ENCODE measurements at regions of chr7 and their contacts with region 1.

Region 1: DNA sequence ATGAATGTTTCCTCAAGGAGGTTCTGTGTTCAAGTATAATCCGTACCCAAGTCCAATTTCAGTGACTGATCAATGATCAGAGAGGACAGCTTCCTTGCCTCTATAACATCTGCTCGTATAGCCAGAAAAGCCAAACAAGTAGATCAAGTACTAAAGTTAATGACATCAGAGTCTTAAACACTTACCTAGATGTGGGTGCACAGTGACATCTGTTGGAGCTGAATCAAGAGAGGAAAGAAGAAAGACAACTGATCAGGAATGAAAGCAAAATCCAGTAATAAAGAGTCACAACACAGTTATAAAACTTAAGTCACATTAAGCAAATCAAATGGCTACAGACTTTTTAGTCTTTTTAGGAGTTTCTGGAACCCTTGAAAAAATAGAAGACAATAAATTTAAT is 236.5 kb downstream of the RELN start:
- DNase-seq: peak; percentile 33
- H3K4me3 ChIP-seq: no peak overlapping the region
- H3K27ac ChIP-seq: no peak overlapping the region
- H3K4me1 ChIP-seq: no peaks in the 10 kb centered on the region
- H3K27me3 ChIP-seq: no peaks in the 10 kb centered on the region
- CTCF ChIP-seq: peak in 1 of 2 donors; percentile 59

Region 2: GRCh38 chr7:103447073-103447951 is 305.7 kb before region 1 on chr7:
- CTCF ChIA-PET with region 1: no interaction called
- dilution Hi-C with region 1: no loop called
- in situ Hi-C with region 1: no loop called
- intact Hi-C with region 1: loop called (anchors 1 kb)
- DNase-seq: peak; percentile 34
- H3K4me3 ChIP-seq: no peak overlapping the region
- H3K27ac ChIP-seq: no peak overlapping the region
- H3K4me1 ChIP-seq: peaks cover 8% of the 10 kb centered on the region
- H3K27me3 ChIP-seq: peaks cover 9% of the 10 kb centered on the region
- CTCF ChIP-seq: peak; percentile 72 to 80

Region 3: GRCh38 chr7:103524042-103524907 is 228.7 kb before region 1 on chr7:
- CTCF ChIA-PET with region 1: no interaction called
- dilution Hi-C with region 1: no loop called
- in situ Hi-C with region 1: no loop called
- intact Hi-C with region 1: loop called (anchors 1 kb)
- DNase-seq: peak; percentile 17
- H3K4me3 ChIP-seq: no peak overlapping the region
- H3K27ac ChIP-seq: no peak overlapping the region
- H3K4me1 ChIP-seq: no peaks in the 10 kb centered on the region
- H3K27me3 ChIP-seq: no peaks in the 10 kb centered on the region
- CTCF ChIP-seq: peak; percentile 32 to 50

Region 4: GRCh38 chr7:103573479-103574058 is 179.4 kb before region 1 on chr7:
- CTCF ChIA-PET with region 1: interaction called, 4 read pairs
- dilution Hi-C with region 1: no loop called
- in situ Hi-C with region 1: loop called in 1 of 2 experiments (anchors 5 kb)
- intact Hi-C with region 1: loop called (anchors 1 kb)
- DNase-seq: peak; percentile 15
- H3K4me3 ChIP-seq: no peak overlapping the region
- H3K27ac ChIP-seq: no peak overlapping the region
- H3K4me1 ChIP-seq: no peaks in the 10 kb centered on the region
- H3K27me3 ChIP-seq: no peaks in the 10 kb centered on the region
- CTCF ChIP-seq: peak; percentile 40 to 48

Region 5: DNA sequence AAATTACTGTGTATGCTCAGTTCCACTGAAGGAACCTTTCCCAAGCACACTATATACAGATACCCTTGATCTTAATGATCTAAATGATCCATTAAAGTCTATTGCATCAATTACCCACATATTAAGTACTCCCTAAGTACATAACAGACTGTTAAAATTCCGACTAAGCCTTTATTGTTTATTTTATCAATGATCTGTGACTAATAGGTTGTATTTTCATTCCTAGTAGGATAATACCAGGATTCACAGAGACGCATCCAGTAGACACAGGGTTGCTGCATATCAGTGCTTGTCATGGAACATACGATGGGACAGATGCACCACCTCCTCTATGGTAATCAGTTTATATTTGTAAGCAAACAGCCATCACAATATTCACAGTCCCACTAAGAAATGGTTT is 147.4 kb before region 1 on chr7:
- CTCF ChIA-PET with region 1: interaction called, 14 read pairs
- dilution Hi-C with region 1: no loop called
- in situ Hi-C with region 1: no loop called
- intact Hi-C with region 1: no loop called
- DNase-seq: no peak
- H3K4me3 ChIP-seq: no peak overlapping the region
- H3K27ac ChIP-seq: no peak overlapping the region
- H3K4me1 ChIP-seq: no peaks in the 10 kb centered on the region
- H3K27me3 ChIP-seq: no peaks in the 10 kb centered on the region
- CTCF ChIP-seq: no peak

Region 6: DNA sequence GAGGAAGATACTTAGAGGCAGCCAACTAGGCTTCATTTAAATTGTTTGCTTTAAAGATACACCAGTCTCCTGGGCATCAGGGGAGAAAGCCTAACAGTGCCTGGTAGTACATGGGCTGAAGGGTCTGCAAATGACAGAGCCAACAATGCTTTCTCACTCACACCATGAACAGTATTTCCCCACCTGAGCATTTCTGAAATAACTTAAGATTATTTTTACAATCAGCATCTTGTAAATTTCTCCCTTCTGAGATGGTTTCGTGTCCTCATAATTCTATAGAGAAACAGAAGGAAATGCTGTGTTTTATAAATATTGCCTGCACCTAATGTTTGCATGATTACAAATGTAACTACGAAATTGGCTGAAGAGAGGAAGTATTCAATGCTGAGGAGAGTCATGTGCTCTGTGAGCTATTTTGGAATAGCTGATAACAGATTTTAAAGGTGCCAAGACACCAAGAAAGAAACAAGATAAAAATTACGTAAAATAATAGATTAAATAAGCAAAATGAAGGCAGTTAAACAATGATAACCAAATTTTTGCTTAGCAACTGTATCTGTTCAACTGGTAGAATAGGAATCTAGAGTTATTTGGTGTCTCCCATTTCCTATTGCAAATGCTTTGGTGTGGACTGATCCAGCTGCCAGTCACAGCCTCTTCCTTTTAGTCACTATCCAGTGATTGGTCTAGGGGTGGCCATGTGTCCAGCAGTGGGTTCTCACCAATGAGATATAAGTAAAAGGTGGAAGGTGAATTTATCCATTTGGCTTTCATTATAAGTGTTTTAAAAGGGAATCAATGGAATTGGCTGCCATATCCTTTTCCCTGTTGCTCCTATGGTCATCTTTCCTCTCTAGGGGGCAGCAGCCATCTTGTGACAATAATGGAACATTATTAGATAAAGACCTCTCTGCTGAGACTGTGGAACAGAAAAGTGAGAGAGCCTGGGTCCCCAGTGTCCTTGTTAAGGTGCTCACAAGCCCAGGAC is 139.0 kb before region 1 on chr7:
- CTCF ChIA-PET with region 1: no interaction called
- dilution Hi-C with region 1: no loop called
- in situ Hi-C with region 1: no loop called
- intact Hi-C with region 1: loop called (anchors 1 kb)
- DNase-seq: no peak
- H3K4me3 ChIP-seq: no peak overlapping the region
- H3K27ac ChIP-seq: no peak overlapping the region
- H3K4me1 ChIP-seq: no peaks in the 10 kb centered on the region
- H3K27me3 ChIP-seq: no peaks in the 10 kb centered on the region
- CTCF ChIP-seq: peak; percentile 36 to 58

Region 7: DNA sequence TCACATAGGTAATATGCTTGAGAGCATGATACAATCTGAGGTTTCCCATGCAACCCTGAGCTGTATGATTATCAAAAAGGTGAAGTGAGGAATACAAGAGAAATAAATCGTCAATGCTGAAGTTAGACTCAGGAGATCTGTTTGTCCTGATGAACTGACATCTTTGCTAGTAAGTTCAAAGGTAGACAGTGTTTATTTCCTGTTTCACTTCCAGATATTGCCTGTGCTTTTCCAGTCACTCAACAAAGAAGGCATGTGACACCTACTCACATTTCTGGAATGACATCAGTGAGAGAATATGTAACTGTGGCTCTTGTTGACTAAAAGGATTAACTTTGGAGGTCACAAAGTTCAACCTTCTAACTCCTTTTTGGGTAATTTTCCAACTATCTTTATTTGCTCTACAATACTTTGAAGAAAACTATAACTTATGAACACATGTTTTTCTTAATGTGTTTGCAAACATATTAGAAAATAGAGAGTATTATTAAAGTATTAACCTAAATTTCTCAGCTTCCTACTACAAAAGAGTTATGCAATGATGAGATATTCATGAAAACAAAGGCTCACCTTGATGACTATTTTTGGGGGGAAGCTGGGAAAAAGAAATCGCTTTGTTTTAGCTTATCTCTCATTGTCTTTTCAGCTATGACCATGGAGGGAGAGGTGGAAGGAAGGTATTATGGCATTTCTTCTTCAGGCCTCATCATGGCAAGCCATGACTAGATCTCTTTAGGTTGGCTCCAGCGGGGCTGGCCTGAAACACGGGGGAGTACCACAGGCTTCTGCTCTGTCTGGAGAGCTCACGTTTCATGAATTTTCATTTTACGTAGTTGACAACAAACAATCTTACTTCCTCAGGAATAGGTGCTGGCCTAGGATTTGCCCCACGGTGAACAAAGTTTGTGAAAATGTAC is 92.3 kb before region 1 on chr7:
- CTCF ChIA-PET with region 1: no interaction called
- dilution Hi-C with region 1: no loop called
- in situ Hi-C with region 1: no loop called
- intact Hi-C with region 1: loop called (anchors 1 kb)
- DNase-seq: peak; percentile 72
- H3K4me3 ChIP-seq: no peak overlapping the region
- H3K27ac ChIP-seq: peak overlapping the region; percentile 25
- H3K4me1 ChIP-seq: peaks cover 12% of the 10 kb centered on the region
- H3K27me3 ChIP-seq: no peaks in the 10 kb centered on the region
- CTCF ChIP-seq: no peak

Region 8: GRCh38 chr7:104017001-104017400 is 264.0 kb after region 1 on chr7:
- CTCF ChIA-PET with region 1: no interaction called
- dilution Hi-C with region 1: no loop called
- in situ Hi-C with region 1: no loop called
- intact Hi-C with region 1: no loop called
- DNase-seq: no peak
- H3K4me3 ChIP-seq: no peak overlapping the region
- H3K27ac ChIP-seq: no peak overlapping the region
- H3K4me1 ChIP-seq: no peaks in the 10 kb centered on the region
- H3K27me3 ChIP-seq: no peaks in the 10 kb centered on the region
- CTCF ChIP-seq: no peak

Measured in mammary epithelial cell (primary cell).